CD4-positive, alpha-beta T cell (primary cell): ENCODE measurements at regions of chr10 and their contacts with region 1.

Region 1: GRCh38 chr10:29735596-29736318 is 101.0 kb upstream of the SVIL start:
- DNase-seq: peak; percentile 63 to 89 (median 80)
- ATAC-seq: peak; percentile 80
- H3K4me3 ChIP-seq: peak overlapping the region; percentile 73
- H3K4me3 Mint-ChIP-seq: peak overlapping the region; percentile 94
- H3K27ac ChIP-seq: peak overlapping the region in 1 of 2 donors; percentile 56
- H3K27ac Mint-ChIP-seq: peak overlapping the region; percentile 81
- H3K4me1 ChIP-seq: peaks cover 33% of the 10 kb centered on the region
- H3K4me1 Mint-ChIP-seq: peaks cover 43% of the 10 kb centered on the region
- H3K27me3 ChIP-seq: no peaks in the 10 kb centered on the region
- H3K27me3 Mint-ChIP-seq: no peaks in the 10 kb centered on the region
- CTCF ChIP-seq: peak; percentile 94

Region 2: GRCh38 chr10:28532383-28533175 is 1203.2 kb before region 1 on chr10 and contains the start of gene WAC:
- CTCF ChIA-PET with region 1: no interaction called
- POLR2A ChIA-PET with region 1: no interaction called
- intact Hi-C with region 1: loop called in 1 of 2 experiments (anchors 10 kb)
- DNase-seq: peak; percentile 93 to 98 (median 97)
- ATAC-seq: peak; percentile 81
- H3K4me3 ChIP-seq: peak within 1 kb of the TSS; percentile 98
- H3K4me3 Mint-ChIP-seq: peak within 1 kb of the TSS; percentile 100
- H3K27ac ChIP-seq: peak within 1 kb of the TSS; percentile 99
- H3K27ac Mint-ChIP-seq: peak within 1 kb of the TSS; percentile 98
- H3K4me1 ChIP-seq: peaks cover 22% of the 10 kb centered on the region
- H3K4me1 Mint-ChIP-seq: peaks cover 73% of the 10 kb centered on the region
- H3K27me3 ChIP-seq: no peaks in the 10 kb centered on the region
- H3K27me3 Mint-ChIP-seq: no peaks in the 10 kb centered on the region
- CTCF ChIP-seq: peak; percentile 30
- total RNA-seq, gene WAC: 169 to 177 TPM

Region 3: DNA sequence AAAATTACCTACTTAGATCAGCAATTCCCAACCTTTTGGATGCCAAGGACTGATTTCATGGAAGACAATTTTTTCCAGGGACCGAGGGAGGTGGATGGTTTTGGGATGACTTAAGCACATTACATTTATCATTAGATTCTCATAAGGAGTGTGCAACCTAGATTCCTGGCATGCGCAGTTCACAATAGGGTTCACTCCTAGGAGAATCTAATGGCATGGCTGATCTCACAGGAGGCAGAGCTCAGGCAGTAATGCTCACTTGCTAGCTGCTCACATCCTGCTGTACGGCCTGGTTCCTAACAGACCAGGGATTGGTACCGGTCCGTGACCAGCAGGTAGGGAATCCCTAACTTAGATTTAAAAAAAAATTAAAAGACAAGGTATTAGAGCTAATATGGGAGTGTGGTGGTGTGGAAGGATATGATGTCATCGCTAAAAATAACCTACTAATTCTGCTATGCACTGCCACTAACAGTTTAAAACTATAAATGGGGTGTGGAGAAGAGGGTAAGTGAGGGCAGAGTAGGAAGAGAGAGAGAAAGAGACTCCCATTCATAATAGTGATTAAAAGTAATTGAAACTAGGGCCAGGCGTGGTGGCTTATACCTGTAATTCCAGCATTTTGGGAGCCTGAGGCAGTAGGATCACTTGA is 775.8 kb before region 1 on chr10:
- CTCF ChIA-PET with region 1: no interaction called
- POLR2A ChIA-PET with region 1: no interaction called
- intact Hi-C with region 1: no loop called
- DNase-seq: no peak
- ATAC-seq: no peak
- H3K4me3 ChIP-seq: no peak overlapping the region
- H3K4me3 Mint-ChIP-seq: no peak overlapping the region
- H3K27ac ChIP-seq: no peak overlapping the region
- H3K27ac Mint-ChIP-seq: no peak overlapping the region
- H3K4me1 ChIP-seq: no peaks in the 10 kb centered on the region
- H3K4me1 Mint-ChIP-seq: no peaks in the 10 kb centered on the region
- H3K27me3 ChIP-seq: no peaks in the 10 kb centered on the region
- H3K27me3 Mint-ChIP-seq: no peaks in the 10 kb centered on the region
- CTCF ChIP-seq: no peak

Region 4: DNA sequence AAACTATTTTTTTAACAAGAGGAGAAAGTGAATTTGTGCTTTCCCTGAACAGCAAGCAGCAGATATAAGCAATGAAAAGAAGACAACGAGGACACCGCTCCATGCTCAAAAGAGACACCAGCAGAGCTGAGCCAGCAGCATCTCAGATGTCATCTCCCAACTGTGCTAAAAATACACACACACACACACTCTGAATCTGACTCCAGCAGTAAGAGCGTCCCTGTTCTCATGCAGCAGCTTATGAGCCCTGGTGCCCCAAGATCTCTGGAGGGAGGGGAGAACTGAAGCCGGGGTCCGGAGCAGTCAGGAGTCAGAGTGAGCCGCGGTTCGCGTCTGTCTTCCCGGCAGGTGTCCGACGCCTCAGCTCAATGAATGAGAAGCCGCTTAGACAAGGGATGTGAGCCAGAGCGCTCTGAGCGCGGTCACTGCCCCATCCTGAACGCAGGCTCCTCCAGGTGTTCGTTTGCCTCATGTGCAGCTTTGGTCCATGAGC is 150.2 kb before region 1 on chr10:
- CTCF ChIA-PET with region 1: interaction called, 10 read pairs
- POLR2A ChIA-PET with region 1: no interaction called
- intact Hi-C with region 1: loop called (anchors 2 kb)
- DNase-seq: no peak
- ATAC-seq: no peak
- H3K4me3 ChIP-seq: no peak overlapping the region
- H3K4me3 Mint-ChIP-seq: no peak overlapping the region
- H3K27ac ChIP-seq: no peak overlapping the region
- H3K27ac Mint-ChIP-seq: no peak overlapping the region
- H3K4me1 ChIP-seq: peaks cover 16% of the 10 kb centered on the region
- H3K4me1 Mint-ChIP-seq: peaks cover 18% of the 10 kb centered on the region
- H3K27me3 ChIP-seq: no peaks in the 10 kb centered on the region
- H3K27me3 Mint-ChIP-seq: no peaks in the 10 kb centered on the region
- CTCF ChIP-seq: no peak

Region 5: GRCh38 chr10:29646238-29646902 is 89.4 kb before region 1 on chr10:
- CTCF ChIA-PET with region 1: interaction called, 10 read pairs
- POLR2A ChIA-PET with region 1: interaction called, 12 read pairs
- intact Hi-C with region 1: no loop called
- DNase-seq: peak in 4 of 14 experiments; percentile 8 to 55 (median 32)
- ATAC-seq: peak; percentile 18
- H3K4me3 ChIP-seq: no peak overlapping the region
- H3K4me3 Mint-ChIP-seq: peak overlapping the region; percentile 57
- H3K27ac ChIP-seq: no peak overlapping the region
- H3K27ac Mint-ChIP-seq: peak overlapping the region; percentile 78
- H3K4me1 ChIP-seq: peaks cover 27% of the 10 kb centered on the region
- H3K4me1 Mint-ChIP-seq: peaks cover 66% of the 10 kb centered on the region
- H3K27me3 ChIP-seq: no peaks in the 10 kb centered on the region
- H3K27me3 Mint-ChIP-seq: no peaks in the 10 kb centered on the region
- CTCF ChIP-seq: no peak

Region 6: DNA sequence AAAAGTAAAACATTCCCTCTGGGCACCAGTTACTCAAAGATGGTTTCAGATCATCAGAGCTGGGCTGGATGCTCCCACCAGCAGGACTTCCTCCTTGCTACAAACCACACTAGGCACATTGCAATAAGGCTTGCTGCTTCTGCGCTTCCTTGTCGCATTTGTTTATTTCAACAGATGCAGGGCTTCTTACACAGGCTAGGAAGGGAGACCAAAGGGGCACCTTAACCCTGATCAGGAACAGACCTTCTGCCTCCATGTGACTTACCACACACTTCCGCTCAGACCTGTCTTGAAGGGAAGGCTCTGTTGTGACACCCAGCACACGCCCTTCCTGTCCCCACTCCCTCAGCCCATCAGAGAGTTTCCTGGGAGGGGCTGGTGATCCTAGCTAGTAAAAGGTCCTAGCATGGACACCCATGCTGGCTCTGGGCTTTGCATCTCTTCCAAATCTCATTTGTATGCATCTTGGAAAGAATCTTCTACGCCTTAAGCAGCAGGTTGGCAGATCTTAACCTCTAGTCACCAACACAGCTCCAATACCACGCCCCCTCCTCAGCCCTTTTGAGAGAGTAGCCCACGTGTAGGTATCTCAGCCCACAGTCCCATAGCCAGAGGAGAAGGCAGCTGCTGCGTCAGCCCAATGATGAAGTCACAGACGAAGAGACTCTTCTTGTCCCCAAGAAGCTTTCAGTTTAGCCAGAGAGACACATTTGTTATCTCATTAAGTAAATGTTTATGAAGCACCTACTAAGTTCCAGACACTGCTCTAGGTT is 53.9 kb before region 1 on chr10:
- CTCF ChIA-PET with region 1: interaction called, 7 read pairs
- POLR2A ChIA-PET with region 1: interaction called, 32 read pairs
- intact Hi-C with region 1: loop called (anchors 2 kb)
- DNase-seq: peak; percentile 36 to 94 (median 60)
- ATAC-seq: peak; percentile 93
- H3K4me3 ChIP-seq: peak overlapping the region; percentile 26
- H3K4me3 Mint-ChIP-seq: peak overlapping the region; percentile 83
- H3K27ac ChIP-seq: peak overlapping the region; percentile 58 to 86
- H3K27ac Mint-ChIP-seq: peak overlapping the region; percentile 93
- H3K4me1 ChIP-seq: peaks cover 70% of the 10 kb centered on the region
- H3K4me1 Mint-ChIP-seq: peaks cover 97% of the 10 kb centered on the region
- H3K27me3 ChIP-seq: no peaks in the 10 kb centered on the region
- H3K27me3 Mint-ChIP-seq: no peaks in the 10 kb centered on the region
- CTCF ChIP-seq: no peak